ENCODE measurements at regions of chr18 and their contacts with region 1.

Region 1: DNA sequence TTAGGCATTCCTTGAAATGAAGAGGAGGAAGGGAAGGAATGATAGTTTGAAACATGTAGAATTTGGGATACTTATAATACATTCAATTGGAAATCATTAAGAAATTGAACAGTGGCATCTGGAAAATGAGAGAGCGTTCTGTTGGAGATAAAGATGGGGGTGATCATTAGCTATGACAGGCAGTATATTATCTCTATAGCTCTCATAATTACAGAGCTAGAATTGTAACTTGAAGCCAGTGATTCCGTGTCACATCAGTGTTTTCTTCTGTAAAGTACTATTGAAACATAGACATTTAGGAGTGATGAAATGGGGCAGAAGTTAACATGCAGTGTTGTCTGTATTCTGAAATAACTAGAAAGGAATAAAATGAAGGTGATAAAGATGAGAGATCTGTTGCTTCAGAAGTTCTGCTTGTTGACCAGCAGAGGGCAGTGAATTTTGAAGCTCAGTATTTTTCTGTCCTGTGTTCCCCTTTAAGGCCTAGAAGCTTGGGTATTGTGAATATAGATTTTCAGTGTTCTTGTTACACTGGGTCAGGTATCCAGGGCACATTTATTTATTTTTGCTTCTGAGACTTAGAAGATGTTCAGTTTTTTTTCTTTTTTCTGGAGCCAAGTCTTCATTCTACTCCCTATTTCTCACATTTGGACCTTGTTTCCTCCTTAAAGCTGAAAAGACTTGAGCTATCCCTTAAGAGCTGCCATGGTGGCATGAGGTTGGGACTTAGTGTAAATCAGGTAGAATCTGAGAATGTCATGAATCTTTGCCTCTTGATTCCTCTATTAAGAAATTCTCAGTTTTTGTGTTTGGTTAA is 157.4 kb downstream of the TAF4B start:
- DNase-seq: peak in 4 of 14 experiments; percentile 6 to 52 (median 36)
- ATAC-seq: no peak
- H3K4me3 ChIP-seq: no peak overlapping the region
- H3K4me3 Mint-ChIP-seq: no peak overlapping the region
- H3K27ac ChIP-seq: no peak overlapping the region
- H3K27ac Mint-ChIP-seq: no peak overlapping the region
- H3K4me1 ChIP-seq: no peaks in the 10 kb centered on the region
- H3K4me1 Mint-ChIP-seq: no peaks in the 10 kb centered on the region
- H3K27me3 ChIP-seq: no peaks in the 10 kb centered on the region
- H3K27me3 Mint-ChIP-seq: no peaks in the 10 kb centered on the region
- CTCF ChIP-seq: peak; percentile 79

Region 2: DNA sequence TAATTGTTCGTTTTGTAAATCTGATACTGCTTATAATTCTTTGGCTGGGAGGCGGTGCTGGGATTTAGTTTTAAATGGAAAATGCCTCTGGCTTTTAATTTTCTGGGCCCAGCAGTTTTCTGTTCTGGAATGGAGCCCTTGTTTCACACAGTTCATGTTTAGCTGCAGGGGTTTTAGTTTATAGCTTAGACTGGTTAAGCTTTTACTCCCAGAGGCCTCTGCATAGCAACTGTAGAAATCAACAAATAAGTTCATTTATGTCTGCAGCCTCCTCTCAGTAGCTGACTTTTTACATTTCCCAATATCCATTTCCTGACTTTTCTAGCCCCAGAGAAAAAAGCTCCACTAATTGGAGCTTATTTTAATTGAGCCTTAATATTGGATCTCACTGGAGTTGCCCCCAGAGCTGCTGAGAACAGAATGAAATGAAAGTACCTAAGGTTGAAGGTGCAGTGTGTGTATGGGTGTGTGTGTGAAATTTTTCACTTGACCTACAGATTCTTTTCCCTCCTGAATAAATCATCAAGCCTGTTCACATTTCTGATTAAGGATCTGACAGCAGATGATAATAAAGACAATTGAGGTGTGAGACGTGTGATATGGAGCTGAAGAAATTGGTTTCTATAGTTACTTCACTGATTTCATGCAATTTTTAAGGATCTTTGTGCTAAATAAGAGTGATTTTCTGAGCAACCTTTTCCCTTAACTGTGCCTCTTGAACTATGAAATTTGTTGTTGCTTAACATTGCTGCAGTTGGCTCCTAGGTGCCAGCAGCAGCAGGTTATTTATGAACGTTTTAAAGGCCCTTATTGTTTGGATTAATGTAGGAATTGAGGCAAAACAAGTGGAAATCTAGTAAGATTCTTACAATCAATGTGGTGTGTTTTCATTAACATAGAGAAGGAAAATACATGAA is 47.8 kb before region 1 on chr18:
- CTCF ChIA-PET with region 1: no interaction called
- POLR2A ChIA-PET with region 1: no interaction called
- intact Hi-C with region 1: no loop called
- DNase-seq: no peak
- ATAC-seq: no peak
- H3K4me3 ChIP-seq: no peak overlapping the region
- H3K4me3 Mint-ChIP-seq: no peak overlapping the region
- H3K27ac ChIP-seq: no peak overlapping the region
- H3K27ac Mint-ChIP-seq: no peak overlapping the region
- H3K4me1 ChIP-seq: no peaks in the 10 kb centered on the region
- H3K4me1 Mint-ChIP-seq: peaks cover 10% of the 10 kb centered on the region
- H3K27me3 ChIP-seq: no peaks in the 10 kb centered on the region
- H3K27me3 Mint-ChIP-seq: no peaks in the 10 kb centered on the region
- CTCF ChIP-seq: no peak

Region 3: GRCh38 chr18:26429535-26430226 is 46.0 kb after region 1 on chr18:
- CTCF ChIA-PET with region 1: no interaction called
- POLR2A ChIA-PET with region 1: no interaction called
- intact Hi-C with region 1: loop called in 1 of 2 experiments (anchors 5 kb)
- DNase-seq: no peak
- ATAC-seq: no peak
- H3K4me3 ChIP-seq: no peak overlapping the region
- H3K4me3 Mint-ChIP-seq: no peak overlapping the region
- H3K27ac ChIP-seq: no peak overlapping the region
- H3K27ac Mint-ChIP-seq: no peak overlapping the region
- H3K4me1 ChIP-seq: no peaks in the 10 kb centered on the region
- H3K4me1 Mint-ChIP-seq: no peaks in the 10 kb centered on the region
- H3K27me3 ChIP-seq: no peaks in the 10 kb centered on the region
- H3K27me3 Mint-ChIP-seq: no peaks in the 10 kb centered on the region
- CTCF ChIP-seq: no peak

Region 4: GRCh38 chr18:26648509-26649192 is 265.0 kb after region 1 on chr18:
- CTCF ChIA-PET with region 1: no interaction called
- POLR2A ChIA-PET with region 1: no interaction called
- intact Hi-C with region 1: loop called in 1 of 2 experiments (anchors 5 kb)
- DNase-seq: no peak
- ATAC-seq: no peak
- H3K4me3 ChIP-seq: no peak overlapping the region
- H3K4me3 Mint-ChIP-seq: no peak overlapping the region
- H3K27ac ChIP-seq: no peak overlapping the region
- H3K27ac Mint-ChIP-seq: no peak overlapping the region
- H3K4me1 ChIP-seq: no peaks in the 10 kb centered on the region
- H3K4me1 Mint-ChIP-seq: no peaks in the 10 kb centered on the region
- H3K27me3 ChIP-seq: peaks cover 5 to 10% of the 10 kb centered on the region in 2 experiments
- H3K27me3 Mint-ChIP-seq: peaks cover 45% of the 10 kb centered on the region
- CTCF ChIP-seq: no peak

Measured in CD4-positive, alpha-beta T cell (primary cell).